ENCODE measurements at regions of chr12 and their contacts with region 1.

Region 1: DNA sequence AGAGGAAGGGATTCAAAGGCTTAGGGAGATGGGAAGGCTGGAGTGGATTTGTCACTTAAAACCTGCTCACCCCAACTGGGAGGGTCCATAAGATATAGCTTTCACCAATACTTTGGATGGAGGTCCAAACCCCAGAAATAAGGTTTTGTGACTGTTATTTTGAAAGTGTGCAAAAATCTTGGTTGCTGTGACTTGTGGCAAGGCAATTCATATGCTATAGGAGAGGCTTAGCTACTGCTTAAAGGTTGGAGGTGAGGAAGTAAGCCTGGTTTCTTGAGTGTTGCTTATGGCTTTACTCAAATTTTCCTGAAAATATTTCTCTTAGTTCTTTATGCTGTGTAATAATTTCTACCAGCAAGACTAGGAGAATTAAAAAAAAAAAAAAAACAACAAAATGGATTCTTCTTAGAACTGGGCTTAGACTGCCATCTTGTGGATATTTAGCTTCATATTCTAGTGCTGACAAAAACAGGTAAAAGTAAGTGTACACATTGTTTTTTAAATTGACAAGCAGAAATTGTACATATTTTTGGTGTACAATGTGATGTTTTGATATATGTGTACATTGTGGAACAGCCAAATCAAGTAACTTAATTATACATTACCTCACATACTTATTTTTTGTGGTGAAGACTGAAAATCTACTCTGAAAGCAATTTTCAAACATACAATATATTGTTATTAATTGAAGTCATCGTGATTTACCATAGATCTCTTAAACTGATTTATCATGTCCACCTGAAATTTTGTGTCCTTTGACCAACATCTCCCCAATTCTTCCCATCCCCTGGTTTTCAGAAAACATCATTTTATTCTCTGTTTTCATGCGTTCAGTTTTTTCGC is 23.0 kb downstream of the PDE6H start:
- DNase-seq: peak in 1 of 2 experiments; percentile 68
- H3K4me3 ChIP-seq: no peak overlapping the region
- H3K27ac ChIP-seq: no peak overlapping the region
- H3K4me1 ChIP-seq: peaks cover 17% of the 10 kb centered on the region
- H3K27me3 ChIP-seq: no peaks in the 10 kb centered on the region
- CTCF ChIP-seq: peak; percentile 85

Region 2: DNA sequence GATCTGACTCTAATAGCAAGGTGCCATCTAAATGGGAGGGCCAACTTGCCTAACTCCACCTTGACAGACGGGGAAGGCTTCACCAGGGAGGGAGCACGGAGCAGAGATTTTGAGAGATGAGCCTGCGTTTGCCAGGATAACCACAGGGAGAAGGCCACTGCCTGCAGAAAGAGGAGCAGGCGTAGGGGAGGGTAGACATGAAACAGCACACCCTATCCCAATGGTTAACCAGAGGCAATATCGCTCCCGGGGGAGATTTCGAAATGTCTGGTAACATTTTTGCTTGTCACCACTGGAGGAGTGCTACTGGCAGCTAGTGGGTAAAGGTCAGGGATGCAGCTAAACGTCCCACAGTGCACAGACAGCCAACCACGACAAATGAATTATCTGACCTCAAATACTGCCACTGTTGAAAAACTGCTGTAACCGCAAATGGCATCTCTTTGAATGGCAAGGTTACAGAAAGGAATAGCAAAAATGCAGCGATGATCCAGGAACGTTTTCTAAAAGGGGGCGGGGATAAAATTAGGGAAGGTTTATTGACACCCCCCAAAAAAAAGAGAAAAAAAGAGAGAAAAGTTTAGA is 756.4 kb before region 1 on chr12:
- CTCF ChIA-PET with region 1: no interaction called
- POLR2A ChIA-PET with region 1: no interaction called
- intact Hi-C with region 1: loop called (anchors 2 kb)
- DNase-seq: peak; percentile 84 to 93
- H3K4me3 ChIP-seq: peak overlapping the region; percentile 51
- H3K27ac ChIP-seq: peak overlapping the region; percentile 94
- H3K4me1 ChIP-seq: peaks cover 28% of the 10 kb centered on the region
- H3K27me3 ChIP-seq: no peaks in the 10 kb centered on the region
- CTCF ChIP-seq: no peak

Region 3: DNA sequence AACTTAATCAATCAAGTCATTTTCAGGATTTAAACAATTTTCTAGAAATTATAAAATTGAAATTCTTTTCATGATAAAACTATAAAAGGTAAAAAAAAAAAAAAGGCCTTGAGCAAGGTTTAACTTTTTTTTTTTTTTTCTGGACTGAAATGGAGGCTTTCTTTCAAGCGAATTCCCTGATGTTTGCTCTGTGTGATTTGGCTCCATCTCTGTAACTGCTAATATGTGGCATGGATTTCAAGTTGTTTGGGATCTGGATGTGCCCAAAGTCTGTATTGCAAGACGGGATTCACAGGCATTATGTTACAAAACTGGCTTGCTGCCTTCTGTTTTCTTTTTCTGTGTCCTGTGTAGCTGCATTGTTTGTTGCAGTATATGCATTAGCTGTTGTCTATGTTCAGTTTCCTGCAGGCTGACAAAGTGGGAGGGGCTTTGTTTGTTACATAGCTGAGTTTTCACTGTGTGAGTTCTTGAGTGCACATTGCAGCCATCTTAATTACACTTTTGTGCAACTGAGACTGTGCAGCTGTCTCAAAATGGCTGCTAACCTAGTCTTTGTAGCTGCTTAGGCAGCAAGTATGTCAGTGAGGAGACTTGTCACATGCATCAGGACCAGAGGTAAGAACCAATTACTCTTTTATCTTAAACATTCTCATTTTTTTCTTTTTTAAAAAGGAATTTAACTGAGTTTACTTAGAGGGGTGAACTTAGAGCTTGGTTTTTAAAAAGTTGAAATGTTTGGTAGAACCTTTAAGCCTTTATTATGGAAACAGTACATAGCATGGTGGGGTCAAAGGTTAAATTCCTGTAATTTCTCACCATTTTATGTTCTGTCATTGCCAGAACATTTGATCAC is 610.8 kb before region 1 on chr12:
- CTCF ChIA-PET with region 1: no interaction called
- POLR2A ChIA-PET with region 1: no interaction called
- intact Hi-C with region 1: no loop called
- DNase-seq: peak; percentile 63 to 75
- H3K4me3 ChIP-seq: no peak overlapping the region
- H3K27ac ChIP-seq: no peak overlapping the region
- H3K4me1 ChIP-seq: 0 out of 2 replicates have a peak, but pooled peaks cover 8% of the 10 kb centered on the region
- H3K27me3 ChIP-seq: no peaks in the 10 kb centered on the region
- CTCF ChIP-seq: no peak

Region 4: GRCh38 chr12:14723763-14724162 is 272.0 kb before region 1 on chr12:
- CTCF ChIA-PET with region 1: no interaction called
- POLR2A ChIA-PET with region 1: no interaction called
- intact Hi-C with region 1: loop called (anchors 1 kb)
- DNase-seq: peak; percentile 36 to 50
- H3K4me3 ChIP-seq: no peak overlapping the region
- H3K27ac ChIP-seq: no peak overlapping the region
- H3K4me1 ChIP-seq: no peaks in the 10 kb centered on the region
- H3K27me3 ChIP-seq: no peaks in the 10 kb centered on the region
- CTCF ChIP-seq: peak; percentile 83

Region 5: GRCh38 chr12:14810953-14811483 is 184.8 kb before region 1 on chr12:
- CTCF ChIA-PET with region 1: interaction called, 19 read pairs
- POLR2A ChIA-PET with region 1: no interaction called
- intact Hi-C with region 1: loop called (anchors 1 kb)
- DNase-seq: peak in 1 of 2 experiments; percentile 63
- H3K4me3 ChIP-seq: no peak overlapping the region
- H3K27ac ChIP-seq: no peak overlapping the region
- H3K4me1 ChIP-seq: no peaks in the 10 kb centered on the region
- H3K27me3 ChIP-seq: no peaks in the 10 kb centered on the region
- CTCF ChIP-seq: peak; percentile 66

Region 6: DNA sequence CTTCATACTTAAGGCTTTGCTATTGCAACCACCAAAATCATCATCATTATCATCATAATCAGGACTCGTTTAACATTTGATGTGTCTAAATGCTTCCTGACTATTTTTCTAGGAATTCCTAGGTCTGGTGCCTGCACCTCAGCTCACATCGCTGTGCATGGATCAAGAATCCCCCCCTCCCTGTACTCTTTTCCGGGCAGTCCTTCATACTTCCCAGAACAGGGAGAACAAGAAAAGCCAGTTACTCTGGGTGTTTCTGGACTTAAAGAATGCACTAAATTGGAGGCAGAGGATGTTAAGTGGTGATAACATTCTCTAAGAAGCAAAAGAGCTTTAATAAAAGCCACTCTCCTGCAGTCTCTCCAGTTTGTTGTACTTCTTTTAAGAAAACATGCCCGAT is 66.8 kb before region 1 on chr12:
- CTCF ChIA-PET with region 1: interaction called, 3 read pairs
- POLR2A ChIA-PET with region 1: interaction called, 6 read pairs
- intact Hi-C with region 1: loop called (anchors 1 kb)
- DNase-seq: peak; percentile 84 to 97
- H3K4me3 ChIP-seq: peak overlapping the region; percentile 50
- H3K27ac ChIP-seq: peak overlapping the region; percentile 78
- H3K4me1 ChIP-seq: peaks cover 72% of the 10 kb centered on the region
- H3K27me3 ChIP-seq: no peaks in the 10 kb centered on the region
- CTCF ChIP-seq: no peak

Region 7: GRCh38 chr12:15220994-15221885 is 225.4 kb after region 1 on chr12 and contains the start of gene RERG:
- CTCF ChIA-PET with region 1: interaction called, 7 read pairs
- POLR2A ChIA-PET with region 1: no interaction called
- intact Hi-C with region 1: loop called (anchors 1 kb)
- DNase-seq: peak; percentile 44 to 87
- H3K4me3 ChIP-seq: peak within 1 kb of the TSS; percentile 41; the same call in 1 of the 2 replicates
- H3K27ac ChIP-seq: no peak within 1 kb of the TSS
- H3K4me1 ChIP-seq: 0 out of 2 replicates have a peak, but pooled peaks cover 6% of the 10 kb centered on the region
- H3K27me3 ChIP-seq: no peaks in the 10 kb centered on the region
- CTCF ChIP-seq: peak; percentile 85
- total RNA-seq, gene RERG: 0.50 and 1.4 TPM in 2 replicates

Measured in PC-9 (cell line).